ENCODE measurements at regions of chr10 and their contacts with region 1.

Region 1: DNA sequence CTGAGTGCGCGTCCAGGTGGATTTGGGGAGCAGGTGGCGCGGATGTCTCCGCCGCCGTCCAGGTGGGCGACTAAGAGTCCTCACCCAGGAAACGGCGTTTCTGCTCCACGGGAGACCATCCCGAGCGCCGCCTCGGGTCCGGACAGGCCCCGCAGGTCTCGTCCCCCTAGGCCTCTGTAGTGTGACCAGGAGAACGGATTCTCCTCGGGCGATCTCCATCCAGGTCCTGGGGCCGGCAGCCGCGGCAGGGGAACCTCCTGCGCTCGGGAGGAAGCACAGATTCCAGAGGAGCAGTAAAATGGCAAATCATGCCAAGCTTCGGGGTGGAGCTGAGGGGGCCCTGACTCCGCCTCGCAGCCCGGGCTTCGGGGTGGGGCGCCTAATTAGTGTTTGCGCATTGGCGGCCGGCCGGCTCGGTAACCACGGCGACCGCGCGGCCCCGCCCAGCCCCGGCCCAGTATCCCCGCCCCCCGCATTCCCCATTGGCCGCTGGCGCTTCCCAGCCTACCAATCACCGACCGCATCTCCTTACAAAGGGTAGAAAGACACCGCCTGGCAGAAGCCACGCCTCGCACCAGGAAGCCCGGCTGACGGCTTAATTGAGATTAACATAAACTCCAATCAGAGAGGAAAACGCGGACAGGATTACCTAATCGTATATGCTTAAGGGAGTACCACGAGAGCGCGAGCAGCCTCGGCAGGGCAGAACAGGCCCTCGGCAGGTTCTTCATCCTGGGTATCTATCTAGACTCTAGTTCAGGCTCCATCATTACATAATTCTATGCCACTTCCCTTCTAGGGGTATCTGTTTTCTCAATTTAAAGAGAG is 168.6 kb downstream of the ARHGAP12 start:
- DNase-seq: peak; percentile 96 to 98 (median 96)
- H3K4me3 ChIP-seq: peak overlapping the region; percentile 84 to 93 (median 87)
- H3K4me3 Mint-ChIP-seq: peak overlapping the region; percentile 80 to 84
- H3K27ac ChIP-seq: peak overlapping the region; percentile 86 to 97
- H3K27ac Mint-ChIP-seq: peak overlapping the region; percentile 89 to 96 (median 94)
- H3K4me1 ChIP-seq: peaks cover 26 to 33% of the 10 kb centered on the region in 2 donors
- H3K4me1 Mint-ChIP-seq: peaks cover 33% of the 10 kb centered on the region
- H3K27me3 ChIP-seq: no peaks in the 10 kb centered on the region
- H3K27me3 Mint-ChIP-seq: peaks cover 0 to 1% (median 0%) of the 10 kb centered on the region in 3 donors
- CTCF ChIP-seq: no peak

Region 2: DNA sequence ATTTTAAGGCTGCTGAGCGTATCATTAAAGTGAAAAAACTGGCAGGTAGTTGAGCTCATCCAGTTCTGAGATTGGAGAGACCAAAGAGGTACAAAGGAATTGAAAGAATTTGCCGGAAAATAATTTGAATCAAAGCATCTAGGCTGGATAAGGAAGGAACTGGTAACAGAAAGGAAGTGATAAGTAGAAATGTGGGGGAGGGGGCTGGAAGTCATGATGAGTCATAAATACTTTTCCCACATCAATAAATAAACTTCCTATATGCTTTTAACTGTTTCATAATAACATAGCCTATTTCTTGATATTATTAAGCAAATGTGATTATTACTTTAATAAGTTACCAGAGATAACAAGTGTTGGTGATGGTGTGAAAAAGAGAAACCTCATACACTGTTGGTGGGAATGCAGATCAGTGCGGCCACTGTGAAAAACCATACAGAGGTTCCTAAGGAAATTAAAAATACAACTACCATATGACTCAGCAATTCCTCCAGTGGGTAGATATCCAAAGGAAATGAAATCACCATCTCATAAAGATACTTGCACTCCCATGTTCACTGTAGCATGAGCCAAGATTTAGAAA is 755.3 kb before region 1 on chr10:
- intact Hi-C with region 1: loop called in 1 of 2 experiments (anchors 10 kb)
- DNase-seq: peak in 2 of 3 donors; percentile 74 to 76
- H3K4me3 ChIP-seq: peak overlapping the region in 1 of 3 experiments; percentile 41
- H3K4me3 Mint-ChIP-seq: peak overlapping the region; percentile 32 to 33
- H3K27ac ChIP-seq: peak overlapping the region in 1 of 2 donors; percentile 70
- H3K27ac Mint-ChIP-seq: peak overlapping the region; percentile 79 to 92 (median 87)
- H3K4me1 ChIP-seq: peaks cover 62 to 85% of the 10 kb centered on the region in 2 donors
- H3K4me1 Mint-ChIP-seq: peaks cover 76% of the 10 kb centered on the region
- H3K27me3 ChIP-seq: no peaks in the 10 kb centered on the region
- H3K27me3 Mint-ChIP-seq: peaks cover 0 to 3% (median 0%) of the 10 kb centered on the region in 3 donors
- CTCF ChIP-seq: no peak

Region 3: GRCh38 chr10:31031558-31032257 is 728.3 kb before region 1 on chr10 and contains the start of gene ZNF438:
- intact Hi-C with region 1: loop called in 1 of 2 experiments (anchors 10 kb)
- DNase-seq: peak; percentile 93 to 97 (median 94)
- H3K4me3 ChIP-seq: peak within 1 kb of the TSS; percentile 74 to 94 (median 84)
- H3K4me3 Mint-ChIP-seq: peak within 1 kb of the TSS; percentile 84 to 94
- H3K27ac ChIP-seq: peak within 1 kb of the TSS; percentile 96 to 100
- H3K27ac Mint-ChIP-seq: peak within 1 kb of the TSS; percentile 98 to 100 (median 99)
- H3K4me1 ChIP-seq: peaks cover 40 to 41% of the 10 kb centered on the region in 2 donors
- H3K4me1 Mint-ChIP-seq: peaks cover 45% of the 10 kb centered on the region
- H3K27me3 ChIP-seq: no peaks in the 10 kb centered on the region
- H3K27me3 Mint-ChIP-seq: no peaks in the 10 kb centered on the region
- CTCF ChIP-seq: peak; percentile 76
- polyA plus RNA-seq, gene ZNF438: 5.4 to 11.1 (median 9.3) TPM

Region 4: GRCh38 chr10:31581741-31582313 is 178.2 kb before region 1 on chr10:
- intact Hi-C with region 1: loop called in 1 of 2 experiments (anchors 10 kb)
- DNase-seq: peak; percentile 81 to 92 (median 87)
- H3K4me3 ChIP-seq: peak overlapping the region; percentile 3 to 62 (median 9)
- H3K4me3 Mint-ChIP-seq: peak overlapping the region; percentile 39 to 87
- H3K27ac ChIP-seq: peak overlapping the region; percentile 84 to 99
- H3K27ac Mint-ChIP-seq: peak overlapping the region; percentile 95 to 99 (median 98)
- H3K4me1 ChIP-seq: peaks cover 60 to 65% of the 10 kb centered on the region in 2 donors
- H3K4me1 Mint-ChIP-seq: peaks cover 61% of the 10 kb centered on the region
- H3K27me3 ChIP-seq: no peaks in the 10 kb centered on the region
- H3K27me3 Mint-ChIP-seq: peaks cover 0 to 3% (median 0%) of the 10 kb centered on the region in 3 donors
- CTCF ChIP-seq: no peak

Region 5: GRCh38 chr10:31603235-31604087 is 156.6 kb before region 1 on chr10:
- intact Hi-C with region 1: loop called in 1 of 2 experiments (anchors 10 kb)
- DNase-seq: peak; percentile 87 to 93 (median 88)
- H3K4me3 ChIP-seq: peak overlapping the region; percentile 61 to 85 (median 67)
- H3K4me3 Mint-ChIP-seq: peak overlapping the region; percentile 86 to 92
- H3K27ac ChIP-seq: peak overlapping the region; percentile 12 to 76
- H3K27ac Mint-ChIP-seq: peak overlapping the region in 6 of 7 donors; percentile 74 to 89 (median 78)
- H3K4me1 ChIP-seq: peaks cover 21 to 35% of the 10 kb centered on the region in 2 donors
- H3K4me1 Mint-ChIP-seq: peaks cover 32% of the 10 kb centered on the region
- H3K27me3 ChIP-seq: no peaks in the 10 kb centered on the region
- H3K27me3 Mint-ChIP-seq: peaks cover 0 to 2% (median 0%) of the 10 kb centered on the region in 3 donors
- CTCF ChIP-seq: no peak

Region 6: GRCh38 chr10:31677195-31678138 is 82.5 kb before region 1 on chr10:
- intact Hi-C with region 1: no loop called
- DNase-seq: no peak
- H3K4me3 ChIP-seq: no peak overlapping the region
- H3K4me3 Mint-ChIP-seq: no peak overlapping the region
- H3K27ac ChIP-seq: no peak overlapping the region
- H3K27ac Mint-ChIP-seq: no peak overlapping the region
- H3K4me1 ChIP-seq: no peaks in the 10 kb centered on the region
- H3K4me1 Mint-ChIP-seq: no peaks in the 10 kb centered on the region
- H3K27me3 ChIP-seq: no peaks in the 10 kb centered on the region
- H3K27me3 Mint-ChIP-seq: no peaks in the 10 kb centered on the region
- CTCF ChIP-seq: no peak

Measured in CD14-positive monocyte (primary cell).